ENCODE measurements at regions of chr7 and their contacts with region 1.

Region 1: DNA sequence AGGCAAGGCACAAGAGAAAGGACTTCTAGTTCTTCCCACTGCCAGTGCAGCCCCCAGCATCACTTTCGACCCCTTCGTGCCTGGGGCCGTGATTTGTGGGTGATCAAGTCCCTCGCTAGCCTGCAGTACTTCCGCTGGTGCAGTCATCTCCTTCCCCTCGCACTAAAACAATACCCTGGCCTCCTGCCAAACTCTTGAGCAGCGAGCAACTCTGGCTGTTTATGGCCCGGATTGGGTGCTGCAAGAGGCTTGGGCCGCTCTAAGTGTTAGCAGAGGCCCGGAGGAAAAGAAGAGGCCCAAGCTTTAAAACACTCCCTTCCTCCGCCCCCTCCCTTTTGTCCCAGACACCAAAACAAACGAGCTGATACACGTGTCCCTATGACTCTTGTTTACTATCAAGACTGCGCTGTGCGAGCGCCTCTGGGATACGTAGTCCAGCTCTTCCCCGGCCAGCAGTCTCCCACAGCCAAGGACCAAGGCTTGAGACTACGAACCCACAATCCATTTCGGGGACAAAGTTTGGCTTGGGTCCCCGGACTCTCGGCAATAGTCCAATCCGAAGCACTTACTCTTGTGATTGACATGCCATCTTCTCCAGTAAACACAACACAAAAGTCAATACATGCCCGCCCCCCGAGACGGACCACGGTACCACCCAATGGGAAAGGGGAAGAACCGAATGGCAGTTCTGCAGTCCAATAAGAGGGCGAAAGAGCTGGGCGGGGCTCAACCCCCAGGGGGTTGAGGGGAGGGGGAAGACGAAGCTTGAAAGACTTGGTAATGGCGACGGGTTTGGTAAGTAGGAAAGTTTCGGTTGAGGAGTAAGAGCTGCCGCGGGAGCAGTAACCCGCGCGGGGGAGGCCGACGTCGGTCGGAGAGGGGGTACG is at the start of gene HBP1:
- DNase-seq: peak; percentile 95 to 100 (median 98)
- ATAC-seq: peak; percentile 77
- H3K4me3 ChIP-seq: peak within 1 kb of the TSS; percentile 85 to 93
- H3K4me3 Mint-ChIP-seq: peak within 1 kb of the TSS; percentile 94
- H3K27ac ChIP-seq: peak within 1 kb of the TSS; percentile 96 to 98
- H3K27ac Mint-ChIP-seq: peak within 1 kb of the TSS; percentile 99
- H3K4me1 ChIP-seq: peaks cover 36% of the 10 kb centered on the region
- H3K4me1 Mint-ChIP-seq: peaks cover 35% of the 10 kb centered on the region
- H3K27me3 ChIP-seq: no peaks in the 10 kb centered on the region
- H3K27me3 Mint-ChIP-seq: no peaks in the 10 kb centered on the region
- CTCF ChIP-seq: no peak
- total RNA-seq, gene HBP1: 233 to 251 TPM

Region 2: DNA sequence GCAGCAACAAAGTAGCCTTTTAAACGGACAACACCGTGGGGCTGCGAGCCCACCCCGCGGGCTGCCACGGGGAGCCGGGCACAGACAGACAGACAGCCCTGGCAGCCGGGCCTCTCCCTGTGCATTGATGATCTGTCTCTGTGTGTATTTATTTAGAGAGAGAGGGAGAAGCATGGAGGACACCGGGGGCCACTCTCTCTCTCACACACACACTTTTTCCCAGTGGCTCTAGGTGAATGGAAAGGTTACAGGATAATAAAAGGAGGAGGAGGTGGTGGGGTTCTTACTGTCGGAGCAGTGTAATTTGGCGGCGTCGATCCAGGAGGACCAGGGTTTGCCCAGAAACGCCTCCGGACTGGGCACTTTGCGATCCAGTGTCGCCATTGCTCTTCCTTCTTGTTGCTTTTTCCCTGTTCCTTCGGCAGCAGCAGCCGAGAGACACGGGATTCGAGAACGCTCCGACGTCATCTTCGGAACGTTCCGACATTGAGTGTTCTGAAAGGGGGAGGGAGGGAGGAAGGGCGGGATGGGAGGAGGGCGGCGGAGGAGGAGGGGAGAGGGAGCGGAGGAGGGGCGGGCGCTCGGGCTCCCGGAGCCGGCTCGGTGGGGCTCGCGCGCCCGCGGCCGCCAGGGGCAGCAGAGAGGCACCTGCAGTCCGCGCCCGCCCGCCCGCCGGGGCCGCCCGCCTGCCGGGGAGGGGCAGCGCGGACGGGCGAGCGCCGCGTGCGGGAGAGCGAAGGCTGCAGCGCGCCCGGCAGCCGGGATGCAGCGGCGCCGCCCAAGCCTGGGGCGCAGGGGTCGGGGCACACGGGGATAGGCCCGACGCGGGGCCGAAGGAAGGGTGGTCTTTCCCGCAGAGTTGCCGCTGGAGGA is 1292.1 kb before region 1 on chr7 and contains the start of gene ATXN7L1:
- CTCF ChIA-PET with region 1: no interaction called
- POLR2A ChIA-PET with region 1: no interaction called
- intact Hi-C with region 1: loop called in 1 of 2 experiments (anchors 5 kb)
- DNase-seq: peak; percentile 81 to 94 (median 89)
- ATAC-seq: peak; percentile 94
- H3K4me3 ChIP-seq: peak within 1 kb of the TSS; percentile 76 to 98
- H3K4me3 Mint-ChIP-seq: peak within 1 kb of the TSS; percentile 97
- H3K27ac ChIP-seq: peak within 1 kb of the TSS; percentile 53 to 78
- H3K27ac Mint-ChIP-seq: peak within 1 kb of the TSS; percentile 96
- H3K4me1 ChIP-seq: peaks cover 37% of the 10 kb centered on the region
- H3K4me1 Mint-ChIP-seq: peaks cover 61% of the 10 kb centered on the region
- H3K27me3 ChIP-seq: no peaks in the 10 kb centered on the region
- H3K27me3 Mint-ChIP-seq: no peaks in the 10 kb centered on the region
- CTCF ChIP-seq: peak; percentile 29
- total RNA-seq, gene ATXN7L1: 17.0 to 18.5 TPM

Region 3: DNA sequence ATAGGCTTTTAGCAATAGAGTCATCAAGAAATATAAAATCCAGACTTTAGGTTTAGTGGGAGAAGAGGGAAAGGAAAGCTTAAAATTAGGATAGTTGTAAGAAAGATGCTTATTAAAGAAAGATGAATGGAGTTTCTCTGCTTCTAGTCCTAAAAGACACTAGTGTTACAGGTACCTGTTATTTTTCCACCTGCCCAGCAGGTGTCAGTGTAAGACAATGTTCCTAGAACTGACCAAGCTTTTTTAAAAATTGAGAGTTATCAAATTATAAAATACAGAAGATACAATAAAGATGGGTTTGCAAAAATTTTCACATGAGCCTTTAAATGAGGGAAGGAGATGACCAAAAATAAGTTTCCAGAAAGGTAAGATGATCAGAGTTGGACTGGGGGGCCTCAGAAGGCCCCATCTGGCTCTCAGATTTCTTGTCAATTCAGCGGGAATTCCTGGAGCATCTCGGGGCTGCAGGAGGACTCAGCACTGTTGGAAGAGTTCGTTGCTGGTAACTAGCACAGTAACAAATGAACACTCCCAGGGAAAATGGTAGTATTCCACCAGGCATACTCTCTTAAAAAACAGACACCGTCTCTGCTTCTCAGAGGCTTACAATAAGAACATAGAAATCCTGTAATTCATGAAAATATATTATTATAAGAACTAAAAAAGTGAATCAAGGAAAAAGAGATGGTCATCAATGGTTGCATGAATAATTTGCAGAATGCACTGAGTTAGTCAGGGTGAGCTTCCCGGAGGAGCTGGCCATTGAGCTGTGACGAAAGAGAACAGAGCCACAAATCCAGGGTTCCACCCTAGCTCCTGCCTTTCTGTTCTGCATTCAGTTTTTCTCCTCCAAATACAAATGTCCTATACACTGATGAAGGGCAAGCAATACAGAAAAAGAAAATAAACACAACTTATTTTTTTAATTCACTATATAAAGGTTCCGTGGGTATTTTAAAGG is 375.2 kb before region 1 on chr7:
- CTCF ChIA-PET with region 1: interaction called, 4 read pairs
- POLR2A ChIA-PET with region 1: no interaction called
- intact Hi-C with region 1: loop called in 1 of 2 experiments (anchors 5 kb)
- DNase-seq: peak in 6 of 9 experiments; percentile 16 to 75 (median 42)
- ATAC-seq: peak; percentile 82
- H3K4me3 ChIP-seq: no peak overlapping the region
- H3K4me3 Mint-ChIP-seq: no peak overlapping the region
- H3K27ac ChIP-seq: no peak overlapping the region
- H3K27ac Mint-ChIP-seq: no peak overlapping the region
- H3K4me1 ChIP-seq: no peaks in the 10 kb centered on the region
- H3K4me1 Mint-ChIP-seq: peaks cover 3% of the 10 kb centered on the region
- H3K27me3 ChIP-seq: no peaks in the 10 kb centered on the region
- H3K27me3 Mint-ChIP-seq: no peaks in the 10 kb centered on the region
- CTCF ChIP-seq: peak; percentile 88

Region 4: GRCh38 chr7:107125458-107125857 is 43.0 kb before region 1 on chr7:
- CTCF ChIA-PET with region 1: interaction called, 3 read pairs
- POLR2A ChIA-PET with region 1: interaction called, 48 read pairs
- intact Hi-C with region 1: loop called in 1 of 2 experiments (anchors 2 kb)
- DNase-seq: no peak
- ATAC-seq: no peak
- H3K4me3 ChIP-seq: no peak overlapping the region
- H3K4me3 Mint-ChIP-seq: peak overlapping the region; percentile 78
- H3K27ac ChIP-seq: peak overlapping the region in 1 of 2 experiments; percentile 83
- H3K27ac Mint-ChIP-seq: peak overlapping the region; percentile 91
- H3K4me1 ChIP-seq: peaks cover 8% of the 10 kb centered on the region
- H3K4me1 Mint-ChIP-seq: peaks cover 20% of the 10 kb centered on the region
- H3K27me3 ChIP-seq: no peaks in the 10 kb centered on the region
- H3K27me3 Mint-ChIP-seq: no peaks in the 10 kb centered on the region
- CTCF ChIP-seq: no peak

Region 5: DNA sequence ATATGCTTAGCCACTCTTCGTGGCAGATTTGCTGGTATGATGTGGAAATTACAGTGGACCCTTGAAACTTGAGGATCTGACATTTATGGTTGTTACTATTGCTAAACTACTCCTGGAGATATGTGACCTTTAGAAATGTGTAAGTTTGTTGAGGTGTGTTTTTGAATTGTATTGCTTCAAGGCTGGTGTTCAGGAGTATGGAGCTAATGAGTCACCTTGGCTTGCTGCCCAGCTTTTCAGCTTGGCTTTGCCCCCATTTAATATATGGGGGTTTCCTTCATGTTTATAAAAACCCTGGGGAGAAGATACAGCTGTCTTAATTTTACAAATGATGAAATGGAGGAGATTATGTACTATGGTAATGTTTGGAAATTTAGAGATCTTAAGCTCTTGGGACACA is 11.9 kb after region 1 on chr7:
- CTCF ChIA-PET with region 1: interaction called, 4 read pairs
- POLR2A ChIA-PET with region 1: interaction called, 28 read pairs
- intact Hi-C with region 1: loop called in 1 of 2 experiments (anchors 1 kb)
- DNase-seq: peak in 8 of 9 experiments; percentile 43 to 78 (median 70)
- ATAC-seq: peak; percentile 65
- H3K4me3 ChIP-seq: no peak overlapping the region
- H3K4me3 Mint-ChIP-seq: no peak overlapping the region
- H3K27ac ChIP-seq: no peak overlapping the region
- H3K27ac Mint-ChIP-seq: peak overlapping the region; percentile 8
- H3K4me1 ChIP-seq: peaks cover 33% of the 10 kb centered on the region
- H3K4me1 Mint-ChIP-seq: peaks cover 63% of the 10 kb centered on the region
- H3K27me3 ChIP-seq: no peaks in the 10 kb centered on the region
- H3K27me3 Mint-ChIP-seq: no peaks in the 10 kb centered on the region
- CTCF ChIP-seq: no peak

Region 6: GRCh38 chr7:107427462-107427861 is 259.0 kb after region 1 on chr7:
- CTCF ChIA-PET with region 1: no interaction called
- POLR2A ChIA-PET with region 1: no interaction called
- intact Hi-C with region 1: no loop called
- DNase-seq: no peak
- ATAC-seq: no peak
- H3K4me3 ChIP-seq: no peak overlapping the region
- H3K4me3 Mint-ChIP-seq: no peak overlapping the region
- H3K27ac ChIP-seq: no peak overlapping the region
- H3K27ac Mint-ChIP-seq: no peak overlapping the region
- H3K4me1 ChIP-seq: no peaks in the 10 kb centered on the region
- H3K4me1 Mint-ChIP-seq: peaks cover 5% of the 10 kb centered on the region
- H3K27me3 ChIP-seq: no peaks in the 10 kb centered on the region
- H3K27me3 Mint-ChIP-seq: no peaks in the 10 kb centered on the region
- CTCF ChIP-seq: no peak

Region 7: GRCh38 chr7:107563775-107564552 is 395.5 kb after region 1 on chr7 and contains the starts of genes COG5 and DUS4L:
- CTCF ChIA-PET with region 1: no interaction called
- POLR2A ChIA-PET with region 1: interaction called, 12 read pairs
- intact Hi-C with region 1: loop called (anchors 5 to 10 kb)
- DNase-seq: peak; percentile 73 to 93 (median 86)
- ATAC-seq: peak; percentile 83
- H3K4me3 ChIP-seq: peak within 1 kb of the TSS; percentile 91 to 97
- H3K4me3 Mint-ChIP-seq: peak within 1 kb of the TSS; percentile 80
- H3K27ac ChIP-seq: peak within 1 kb of the TSS; percentile 95 to 96
- H3K27ac Mint-ChIP-seq: peak within 1 kb of the TSS; percentile 89
- H3K4me1 ChIP-seq: peaks cover 46% of the 10 kb centered on the region
- H3K4me1 Mint-ChIP-seq: peaks cover 65% of the 10 kb centered on the region
- H3K27me3 ChIP-seq: no peaks in the 10 kb centered on the region
- H3K27me3 Mint-ChIP-seq: no peaks in the 10 kb centered on the region
- CTCF ChIP-seq: no peak
- total RNA-seq, gene COG5: 45.7 to 46.8 TPM
- total RNA-seq, gene DUS4L: 13.1 to 16.4 TPM

Measured in CD8-positive, alpha-beta T cell (primary cell).